Panc1 (cell line): ENCODE measurements at regions of chr2 and their contacts with region 1.

Region 1: GRCh38 chr2:177148477-177149154 is 64.0 kb upstream of the HNRNPA3 start:
- DNase-seq: peak; percentile 61
- ATAC-seq: peak; percentile 99
- H3K4me3 ChIP-seq: peak overlapping the region; percentile 41 to 50
- H3K27ac ChIP-seq: no peak overlapping the region
- H3K4me1 ChIP-seq: no peaks in the 10 kb centered on the region; the same call in 1 of the 2 replicates
- H3K27me3 ChIP-seq: peaks cover 20% of the 10 kb centered on the region
- CTCF ChIP-seq: peak; percentile 97

Region 2: DNA sequence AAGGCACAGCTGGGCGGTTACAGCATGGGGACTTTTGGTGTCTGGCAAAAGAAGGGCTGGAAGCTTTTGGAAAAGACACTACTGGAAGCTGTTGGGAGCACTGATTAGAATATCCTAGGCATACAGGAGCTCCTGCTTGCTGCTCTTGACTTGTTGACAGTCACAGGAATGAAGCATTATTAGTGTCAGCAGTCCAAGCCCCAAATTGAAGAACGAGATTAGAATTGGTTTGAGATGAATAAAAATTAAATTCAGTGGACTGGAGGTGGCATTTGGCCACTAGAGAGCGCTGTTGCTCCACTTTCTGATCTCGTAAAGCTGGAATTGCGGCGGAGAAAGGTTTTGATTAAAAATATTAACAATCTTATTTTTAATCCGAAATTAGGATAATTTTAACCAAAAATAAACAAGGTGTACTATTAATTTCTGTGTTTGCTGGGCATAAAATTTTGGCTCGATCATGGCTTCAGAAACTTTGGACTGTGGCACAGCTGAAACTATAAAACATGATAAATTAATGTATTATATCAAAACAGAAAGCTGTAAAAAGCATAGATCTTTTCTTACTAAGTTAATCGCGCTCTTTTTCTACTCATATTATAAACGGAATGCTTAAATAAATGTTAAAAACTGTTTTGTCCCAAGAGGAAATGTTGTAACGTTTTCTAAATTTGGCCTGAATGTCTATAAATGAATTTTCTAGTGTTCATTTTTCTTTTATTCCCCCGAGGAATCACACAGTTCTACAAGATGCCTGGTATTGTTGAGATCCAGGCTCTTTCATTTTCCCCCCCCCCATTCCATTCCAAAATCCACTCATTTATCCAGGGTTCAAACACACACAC is 1021.5 kb before region 1 on chr2:
- CTCF ChIA-PET with region 1: interaction called, 3 read pairs
- POLR2A ChIA-PET with region 1: no interaction called
- in situ Hi-C with region 1: no loop called
- intact Hi-C with region 1: loop called (anchors 5 kb)
- DNase-seq: no peak
- ATAC-seq: peak; percentile 72; the same call in 1 of the 2 replicates
- H3K4me3 ChIP-seq: peak overlapping the region in 1 of 2 experiments; percentile 25; a peak in 1 of 4 replicates
- H3K27ac ChIP-seq: no peak overlapping the region
- H3K4me1 ChIP-seq: peaks cover 7% of the 10 kb centered on the region
- H3K27me3 ChIP-seq: no peaks in the 10 kb centered on the region
- CTCF ChIP-seq: peak; percentile 87

Region 3: DNA sequence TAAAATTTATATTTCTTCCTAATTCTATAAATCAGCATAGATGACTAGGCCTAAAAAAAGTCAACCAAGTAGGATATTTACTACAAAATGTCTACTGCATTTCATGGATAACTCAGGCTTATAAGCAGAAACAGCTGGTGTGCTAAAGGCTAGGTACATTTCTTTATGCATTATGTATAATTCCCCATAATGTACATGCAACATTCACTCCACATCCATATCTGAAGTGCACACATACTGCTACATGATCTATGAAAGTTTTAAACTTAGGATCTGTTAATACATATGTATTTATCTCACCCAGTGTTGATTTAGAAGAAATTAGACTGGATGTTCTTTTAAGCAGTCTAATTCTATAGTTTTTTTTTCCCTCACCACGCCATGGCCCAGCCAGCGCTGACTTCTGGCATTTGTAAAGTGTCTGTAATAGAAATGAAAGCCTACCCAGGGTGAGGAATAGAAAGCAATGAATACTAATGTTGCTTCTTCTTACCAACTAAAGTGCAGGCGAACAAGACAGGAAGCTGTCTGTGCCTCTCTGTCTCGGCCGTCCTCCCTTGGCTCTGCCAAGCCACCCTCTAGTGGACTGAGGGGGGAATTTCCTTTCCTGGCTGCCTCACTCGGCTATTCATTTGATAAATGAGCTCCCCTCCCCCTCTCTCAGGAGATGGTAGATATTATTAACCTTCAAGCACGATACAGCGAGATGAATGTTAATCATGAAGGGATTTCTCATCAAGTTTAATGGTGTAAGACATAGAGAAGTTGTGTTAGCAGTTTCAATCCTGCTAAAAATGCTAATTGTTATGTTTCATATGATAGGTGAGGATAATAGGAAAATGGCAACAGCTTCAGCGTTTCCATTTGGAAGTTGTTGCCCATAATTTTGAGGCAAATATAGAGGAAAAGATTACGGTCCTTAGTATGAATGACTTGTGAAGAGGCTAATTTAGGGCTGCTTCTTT is 494.9 kb before region 1 on chr2:
- CTCF ChIA-PET with region 1: interaction called, 3 read pairs
- POLR2A ChIA-PET with region 1: no interaction called
- in situ Hi-C with region 1: no loop called
- intact Hi-C with region 1: loop called (anchors 5 kb)
- DNase-seq: no peak
- ATAC-seq: peak; percentile 92
- H3K4me3 ChIP-seq: no peak overlapping the region
- H3K27ac ChIP-seq: no peak overlapping the region
- H3K4me1 ChIP-seq: no peaks in the 10 kb centered on the region
- H3K27me3 ChIP-seq: no peaks in the 10 kb centered on the region
- CTCF ChIP-seq: peak; percentile 86

Region 4: GRCh38 chr2:176814306-176815052 is 334.1 kb before region 1 on chr2:
- CTCF ChIA-PET with region 1: interaction called, 5 read pairs
- POLR2A ChIA-PET with region 1: no interaction called
- in situ Hi-C with region 1: no loop called
- intact Hi-C with region 1: loop called (anchors 2 kb)
- DNase-seq: peak; percentile 4
- ATAC-seq: no peak
- H3K4me3 ChIP-seq: no peak overlapping the region
- H3K27ac ChIP-seq: no peak overlapping the region
- H3K4me1 ChIP-seq: no peaks in the 10 kb centered on the region
- H3K27me3 ChIP-seq: no peaks in the 10 kb centered on the region
- CTCF ChIP-seq: peak; percentile 67; the same call in 1 of the 2 replicates

Region 5: GRCh38 chr2:176821345-176821744 is 327.3 kb before region 1 on chr2:
- CTCF ChIA-PET with region 1: interaction called, 3 read pairs
- POLR2A ChIA-PET with region 1: interaction called, 10 read pairs
- in situ Hi-C with region 1: no loop called
- intact Hi-C with region 1: no loop called
- DNase-seq: no peak
- ATAC-seq: no peak
- H3K4me3 ChIP-seq: no peak overlapping the region
- H3K27ac ChIP-seq: no peak overlapping the region
- H3K4me1 ChIP-seq: no peaks in the 10 kb centered on the region
- H3K27me3 ChIP-seq: peaks cover 7% of the 10 kb centered on the region
- CTCF ChIP-seq: no peak

Region 6: DNA sequence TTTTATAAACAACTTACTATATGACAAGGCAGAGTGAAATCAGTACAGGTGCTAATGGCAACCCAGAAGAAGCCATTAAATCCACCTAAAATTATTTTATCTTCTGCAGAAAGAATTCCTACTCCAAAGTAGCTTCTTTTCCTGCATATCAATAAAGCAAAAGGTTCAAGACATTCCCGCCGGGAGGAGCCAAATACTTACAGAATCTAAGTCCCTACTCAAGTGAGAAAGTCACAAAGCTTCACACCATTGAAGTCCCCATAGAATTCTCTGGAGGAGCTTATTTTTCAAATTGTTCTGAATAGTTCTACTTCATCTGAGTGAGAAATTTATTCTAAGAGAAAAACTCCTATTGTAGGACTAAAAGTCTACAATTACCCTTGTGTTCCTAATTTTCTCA is 169.7 kb before region 1 on chr2:
- CTCF ChIA-PET with region 1: interaction called, 4 read pairs
- POLR2A ChIA-PET with region 1: no interaction called
- in situ Hi-C with region 1: no loop called
- intact Hi-C with region 1: loop called (anchors 5 kb)
- DNase-seq: no peak
- ATAC-seq: no peak
- H3K4me3 ChIP-seq: no peak overlapping the region
- H3K27ac ChIP-seq: no peak overlapping the region
- H3K4me1 ChIP-seq: no peaks in the 10 kb centered on the region
- H3K27me3 ChIP-seq: 0 out of 2 replicates have a peak, but pooled peaks cover 2% of the 10 kb centered on the region
- CTCF ChIP-seq: peak; percentile 9; the same call in 1 of the 2 replicates

Region 7: DNA sequence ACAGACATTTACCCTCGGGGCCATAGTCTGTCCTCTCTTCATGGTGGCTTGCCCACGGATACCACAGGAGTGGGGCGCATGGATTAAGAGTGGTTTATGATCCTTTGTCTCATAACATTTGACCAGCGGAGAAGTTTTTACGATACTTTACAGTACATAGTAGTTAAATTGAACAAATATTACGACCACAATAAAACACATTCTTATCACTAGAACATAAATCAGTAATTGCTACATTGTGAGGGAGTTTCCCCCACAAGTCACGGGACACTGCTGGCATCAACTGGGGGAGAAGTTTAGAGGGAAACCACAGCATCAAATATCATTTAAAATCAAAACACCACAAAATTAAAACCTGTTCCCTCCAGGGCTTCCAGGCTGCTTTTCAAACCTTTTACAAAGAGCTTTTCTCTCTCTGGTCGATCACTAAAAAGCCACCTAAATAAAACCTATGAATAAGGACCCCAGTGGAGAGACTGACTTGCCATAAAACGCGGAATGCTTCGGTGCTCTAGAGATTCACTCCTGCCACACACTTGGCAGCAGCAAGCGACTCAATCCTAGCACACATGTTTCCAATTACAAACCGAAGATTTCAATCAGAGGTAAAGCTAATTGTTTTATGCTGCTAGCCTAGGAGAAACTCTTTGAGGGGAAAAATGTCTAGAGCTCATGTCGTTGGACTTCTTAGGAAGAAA is 109.7 kb before region 1 on chr2:
- CTCF ChIA-PET with region 1: no interaction called
- POLR2A ChIA-PET with region 1: no interaction called
- in situ Hi-C with region 1: no loop called
- intact Hi-C with region 1: no loop called
- DNase-seq: no peak
- ATAC-seq: no peak; the same call in 1 of the 2 replicates
- H3K4me3 ChIP-seq: no peak overlapping the region
- H3K27ac ChIP-seq: no peak overlapping the region
- H3K4me1 ChIP-seq: peaks cover 6% of the 10 kb centered on the region; the same call in 1 of the 2 replicates
- H3K27me3 ChIP-seq: peaks cover 8% of the 10 kb centered on the region
- CTCF ChIP-seq: no peak

Region 8: DNA sequence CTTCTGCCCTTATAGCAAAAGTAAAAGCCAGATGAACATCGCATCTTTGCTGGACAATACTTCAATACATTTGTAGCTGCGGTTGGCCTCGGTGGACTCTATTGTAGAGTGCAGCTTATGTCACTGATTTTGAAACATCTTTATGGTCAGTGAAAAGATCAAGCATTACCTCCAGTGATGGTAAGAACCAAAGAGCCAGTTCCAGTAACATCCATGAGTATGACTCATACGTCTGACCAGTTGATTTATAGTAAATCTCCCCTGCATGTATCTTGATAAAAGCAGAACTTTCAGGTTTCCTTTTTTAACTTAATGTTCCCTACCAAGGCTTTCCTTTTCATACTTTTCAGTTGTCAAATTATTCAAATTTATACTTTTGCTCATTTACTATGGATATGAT is 55.2 kb before region 1 on chr2:
- CTCF ChIA-PET with region 1: no interaction called
- POLR2A ChIA-PET with region 1: no interaction called
- in situ Hi-C with region 1: no loop called
- intact Hi-C with region 1: no loop called
- DNase-seq: no peak
- ATAC-seq: no peak
- H3K4me3 ChIP-seq: no peak overlapping the region
- H3K27ac ChIP-seq: no peak overlapping the region
- H3K4me1 ChIP-seq: no peaks in the 10 kb centered on the region
- H3K27me3 ChIP-seq: no peaks in the 10 kb centered on the region
- CTCF ChIP-seq: no peak

Region 9: GRCh38 chr2:177758591-177759371 is 610.2 kb after region 1 on chr2:
- CTCF ChIA-PET with region 1: no interaction called
- POLR2A ChIA-PET with region 1: no interaction called
- in situ Hi-C with region 1: no loop called
- intact Hi-C with region 1: loop called (anchors 10 kb)
- DNase-seq: peak; percentile 8
- ATAC-seq: peak; percentile 74
- H3K4me3 ChIP-seq: no peak overlapping the region
- H3K27ac ChIP-seq: no peak overlapping the region
- H3K4me1 ChIP-seq: peaks cover 5% of the 10 kb centered on the region; the same call in 1 of the 2 replicates
- H3K27me3 ChIP-seq: no peaks in the 10 kb centered on the region; the same call in 1 of the 2 replicates
- CTCF ChIP-seq: peak; percentile 70